ENCODE measurements at regions of chr17 and their contacts with region 1.

Region 1: DNA sequence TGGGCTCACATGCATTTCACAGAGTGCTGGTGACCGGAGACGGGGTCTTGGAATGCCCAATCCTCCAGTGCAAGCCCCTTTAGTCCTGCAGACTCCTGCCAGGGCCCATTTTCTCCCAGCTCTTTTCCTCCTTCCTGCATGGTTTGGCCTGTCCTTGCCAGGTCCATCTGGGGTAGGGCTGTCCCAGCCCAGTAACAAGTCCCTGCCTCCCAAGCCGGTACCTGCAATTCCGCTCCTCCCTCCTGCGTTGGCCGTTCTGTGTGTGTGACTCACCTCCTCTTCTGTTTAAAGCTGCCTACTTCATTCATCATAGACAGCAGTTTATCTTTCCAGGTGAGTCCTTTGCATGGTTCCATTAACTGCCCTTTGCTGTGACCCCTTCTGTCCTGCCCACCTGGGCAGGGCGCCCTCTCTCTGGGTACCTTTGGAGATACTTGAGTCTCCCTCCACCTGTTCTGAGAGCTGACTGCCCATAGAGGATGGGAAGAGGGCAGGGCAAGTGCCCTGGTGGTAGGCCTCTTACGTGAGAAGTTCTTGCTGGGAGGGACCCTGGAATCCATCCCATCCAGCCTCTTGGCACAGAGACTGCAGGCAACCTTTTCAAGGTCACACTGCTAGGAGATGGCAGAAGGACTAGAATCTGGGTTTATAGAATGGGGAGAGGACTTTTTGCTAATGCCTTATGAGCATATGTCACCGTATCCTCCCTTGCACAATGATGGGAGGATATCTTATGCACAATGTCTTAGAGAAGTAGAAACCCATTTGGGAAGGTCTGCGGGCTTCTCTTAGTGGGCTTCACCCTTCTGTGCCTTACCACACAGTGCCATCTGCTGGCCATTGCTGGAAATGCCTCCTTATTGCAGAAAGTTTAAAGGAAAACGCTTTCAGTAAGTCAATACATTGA is 29.7 kb upstream of the LGALS9 start:
- DNase-seq: peak; percentile 71
- ATAC-seq: peak; percentile 64
- H3K4me3 Mint-ChIP-seq: no peak overlapping the region
- H3K27ac Mint-ChIP-seq: no peak overlapping the region
- H3K4me1 Mint-ChIP-seq: peaks cover 2% of the 10 kb centered on the region
- H3K27me3 Mint-ChIP-seq: no peaks in the 10 kb centered on the region
- CTCF ChIP-seq: no peak

Region 2: GRCh38 chr17:27199948-27200347 is 401.4 kb before region 1 on chr17:
- CTCF ChIA-PET with region 1: interaction called, 15 read pairs
- POLR2A ChIA-PET with region 1: no interaction called
- intact Hi-C with region 1: loop called (anchors 1 kb)
- DNase-seq: no peak
- ATAC-seq: no peak
- H3K4me3 Mint-ChIP-seq: no peak overlapping the region
- H3K27ac Mint-ChIP-seq: no peak overlapping the region
- H3K4me1 Mint-ChIP-seq: no peaks in the 10 kb centered on the region
- H3K27me3 Mint-ChIP-seq: no peaks in the 10 kb centered on the region
- CTCF ChIP-seq: no peak

Region 3: GRCh38 chr17:27332485-27333409 is 268.6 kb before region 1 on chr17:
- CTCF ChIA-PET with region 1: interaction called, 11 read pairs
- POLR2A ChIA-PET with region 1: no interaction called
- intact Hi-C with region 1: no loop called
- DNase-seq: peak; percentile 83
- ATAC-seq: peak; percentile 88
- H3K4me3 Mint-ChIP-seq: peak overlapping the region; percentile 86
- H3K27ac Mint-ChIP-seq: peak overlapping the region; percentile 87
- H3K4me1 Mint-ChIP-seq: peaks cover 36% of the 10 kb centered on the region
- H3K27me3 Mint-ChIP-seq: no peaks in the 10 kb centered on the region
- CTCF ChIP-seq: no peak

Region 4: GRCh38 chr17:27381007-27381501 is 220.3 kb before region 1 on chr17:
- CTCF ChIA-PET with region 1: interaction called, 51 read pairs
- POLR2A ChIA-PET with region 1: no interaction called
- intact Hi-C with region 1: loop called (anchors 1 kb)
- DNase-seq: peak; percentile 70
- ATAC-seq: peak; percentile 94
- H3K4me3 Mint-ChIP-seq: no peak overlapping the region
- H3K27ac Mint-ChIP-seq: no peak overlapping the region
- H3K4me1 Mint-ChIP-seq: peaks cover 6% of the 10 kb centered on the region
- H3K27me3 Mint-ChIP-seq: peaks cover 18% of the 10 kb centered on the region
- CTCF ChIP-seq: peak; percentile 35

Region 5: DNA sequence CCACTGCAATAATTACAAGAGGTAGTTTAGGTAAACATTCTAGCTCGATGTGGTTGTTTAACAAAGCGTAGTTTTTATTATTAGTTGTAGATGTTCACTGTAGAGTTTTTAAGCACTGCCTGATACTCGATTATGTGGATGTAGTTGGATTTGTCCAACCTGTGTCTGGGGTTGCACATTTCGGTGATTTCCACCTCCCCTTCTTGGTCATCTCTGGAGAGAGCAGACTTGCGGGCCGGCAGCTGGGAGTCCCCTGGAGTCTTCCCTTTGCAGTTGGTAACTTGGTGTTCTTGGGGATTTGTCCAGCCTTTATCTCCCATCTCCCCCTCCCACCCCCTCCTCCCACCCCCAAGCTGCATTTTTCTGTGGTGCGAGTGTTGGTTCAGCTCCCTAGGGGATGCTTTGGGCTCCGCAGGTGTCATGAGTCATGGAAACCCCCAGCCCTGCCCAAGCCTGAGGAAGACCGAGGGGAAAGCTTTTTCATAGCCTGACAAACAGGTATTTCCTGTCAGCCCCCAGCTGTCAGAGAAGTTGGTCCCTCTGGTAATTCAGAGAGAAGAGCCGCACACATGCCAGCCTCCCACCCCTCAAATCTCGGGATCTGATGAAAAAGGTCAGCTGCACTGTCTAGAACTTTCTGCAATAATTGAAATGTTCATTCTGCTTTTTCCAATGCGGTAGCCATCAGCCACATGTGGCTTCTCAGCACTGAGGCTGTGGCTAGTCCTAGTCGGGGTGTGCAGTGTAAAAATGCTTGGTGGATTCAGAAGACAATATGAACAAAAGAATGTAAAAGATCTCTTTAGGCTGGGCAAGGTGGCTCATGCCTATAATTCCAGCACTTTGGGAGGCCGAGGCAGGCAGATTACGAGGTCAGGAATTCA is 94.7 kb before region 1 on chr17:
- CTCF ChIA-PET with region 1: interaction called, 11 read pairs
- POLR2A ChIA-PET with region 1: interaction called, 4 read pairs
- intact Hi-C with region 1: no loop called
- DNase-seq: peak; percentile 49
- ATAC-seq: peak; percentile 88
- H3K4me3 Mint-ChIP-seq: peak overlapping the region; percentile 62
- H3K27ac Mint-ChIP-seq: peak overlapping the region; percentile 83
- H3K4me1 Mint-ChIP-seq: peaks cover 46% of the 10 kb centered on the region
- H3K27me3 Mint-ChIP-seq: no peaks in the 10 kb centered on the region
- CTCF ChIP-seq: no peak

Region 6: GRCh38 chr17:27569257-27569722 is 32.0 kb before region 1 on chr17:
- CTCF ChIA-PET with region 1: interaction called, 18 read pairs
- POLR2A ChIA-PET with region 1: no interaction called
- intact Hi-C with region 1: loop called (anchors 2 kb)
- DNase-seq: no peak
- ATAC-seq: peak; percentile 88
- H3K4me3 Mint-ChIP-seq: no peak overlapping the region
- H3K27ac Mint-ChIP-seq: no peak overlapping the region
- H3K4me1 Mint-ChIP-seq: no peaks in the 10 kb centered on the region
- H3K27me3 Mint-ChIP-seq: no peaks in the 10 kb centered on the region
- CTCF ChIP-seq: no peak

Region 7: DNA sequence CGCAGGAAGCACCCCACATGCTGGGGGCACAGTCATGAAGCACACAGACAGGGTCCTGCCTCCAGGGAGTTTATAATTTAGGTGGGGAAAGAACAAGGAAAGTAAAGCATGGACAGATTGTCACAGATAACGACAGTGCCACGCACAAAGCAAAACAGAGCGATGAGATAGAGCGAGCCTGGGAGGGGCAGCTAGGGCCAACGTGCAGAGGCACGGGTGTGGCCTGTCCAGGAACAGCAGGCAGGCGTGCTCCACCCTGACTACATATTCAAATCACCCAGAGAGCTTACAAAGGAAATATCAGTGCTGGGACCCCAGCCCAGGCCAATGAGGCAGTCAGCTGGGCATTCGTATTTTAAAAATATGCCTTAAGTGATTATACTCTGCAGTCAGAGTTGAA is 46.4 kb after region 1 on chr17:
- CTCF ChIA-PET with region 1: interaction called, 112 read pairs
- POLR2A ChIA-PET with region 1: no interaction called
- intact Hi-C with region 1: loop called (anchors 1 kb)
- DNase-seq: no peak
- ATAC-seq: no peak
- H3K4me3 Mint-ChIP-seq: no peak overlapping the region
- H3K27ac Mint-ChIP-seq: no peak overlapping the region
- H3K4me1 Mint-ChIP-seq: peaks cover 5% of the 10 kb centered on the region
- H3K27me3 Mint-ChIP-seq: no peaks in the 10 kb centered on the region
- CTCF ChIP-seq: no peak